Endothelial cell of umbilical vein (primary cell): ENCODE measurements at regions of chrX and their contacts with region 1.

Region 1: GRCh38 chrX:38654302-38654701 is 93.0 kb downstream of the TSPAN7 start:
- DNase-seq: peak; percentile 43
- H3K4me3 ChIP-seq: no peak overlapping the region
- H3K27ac ChIP-seq: no peak overlapping the region
- H3K4me1 ChIP-seq: no peaks in the 10 kb centered on the region
- H3K27me3 ChIP-seq: no peaks in the 10 kb centered on the region
- CTCF ChIP-seq: peak; percentile 34 to 37
- POLR2A ChIP-seq: no peak

Region 2: GRCh38 chrX:38260231-38260630 is 394.1 kb before region 1 on chrX:
- CTCF ChIA-PET with region 1: no interaction called
- POLR2A ChIA-PET with region 1: no interaction called
- dilution Hi-C with region 1: no loop called
- intact Hi-C with region 1: loop called (anchors 5 kb)
- DNase-seq: peak; percentile 35
- H3K4me3 ChIP-seq: no peak overlapping the region
- H3K27ac ChIP-seq: no peak overlapping the region
- H3K4me1 ChIP-seq: no peaks in the 10 kb centered on the region
- H3K27me3 ChIP-seq: no peaks in the 10 kb centered on the region
- CTCF ChIP-seq: peak; percentile 15 to 31
- POLR2A ChIP-seq: no peak

Region 3: DNA sequence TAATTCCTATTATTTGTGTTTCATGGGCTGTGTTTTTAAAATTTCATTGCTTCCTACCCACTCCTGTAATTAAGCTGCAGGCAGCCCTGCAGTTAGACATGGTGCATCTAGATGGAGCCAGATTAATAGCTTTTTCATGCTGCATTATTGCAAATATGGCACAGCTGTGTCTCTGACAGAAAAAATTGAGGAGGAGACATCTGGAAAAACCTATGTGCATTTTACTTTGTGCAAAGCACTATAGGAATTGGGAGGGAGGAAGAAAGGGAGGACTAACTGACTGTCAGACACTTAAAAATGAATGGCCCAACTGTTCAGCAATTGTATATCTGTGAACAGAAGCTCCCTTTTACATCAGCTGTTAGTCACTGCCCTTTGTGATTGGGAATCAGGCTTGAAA is 318.9 kb before region 1 on chrX:
- CTCF ChIA-PET with region 1: interaction called, 29 read pairs
- POLR2A ChIA-PET with region 1: no interaction called
- dilution Hi-C with region 1: no loop called
- intact Hi-C with region 1: loop called (anchors 5 kb)
- DNase-seq: no peak
- H3K4me3 ChIP-seq: no peak overlapping the region
- H3K27ac ChIP-seq: no peak overlapping the region
- H3K4me1 ChIP-seq: peaks cover 5% of the 10 kb centered on the region
- H3K27me3 ChIP-seq: no peaks in the 10 kb centered on the region
- CTCF ChIP-seq: peak in 1 of 2 donors; percentile 27
- POLR2A ChIP-seq: no peak

Region 4: GRCh38 chrX:38375891-38376290 is 278.4 kb before region 1 on chrX:
- CTCF ChIA-PET with region 1: interaction called, 4 read pairs
- POLR2A ChIA-PET with region 1: no interaction called
- dilution Hi-C with region 1: no loop called
- intact Hi-C with region 1: loop called (anchors 1 kb)
- DNase-seq: peak; percentile 12
- H3K4me3 ChIP-seq: no peak overlapping the region
- H3K27ac ChIP-seq: no peak overlapping the region
- H3K4me1 ChIP-seq: no peaks in the 10 kb centered on the region
- H3K27me3 ChIP-seq: no peaks in the 10 kb centered on the region
- CTCF ChIP-seq: peak; percentile 28 to 40
- POLR2A ChIP-seq: no peak

Region 5: DNA sequence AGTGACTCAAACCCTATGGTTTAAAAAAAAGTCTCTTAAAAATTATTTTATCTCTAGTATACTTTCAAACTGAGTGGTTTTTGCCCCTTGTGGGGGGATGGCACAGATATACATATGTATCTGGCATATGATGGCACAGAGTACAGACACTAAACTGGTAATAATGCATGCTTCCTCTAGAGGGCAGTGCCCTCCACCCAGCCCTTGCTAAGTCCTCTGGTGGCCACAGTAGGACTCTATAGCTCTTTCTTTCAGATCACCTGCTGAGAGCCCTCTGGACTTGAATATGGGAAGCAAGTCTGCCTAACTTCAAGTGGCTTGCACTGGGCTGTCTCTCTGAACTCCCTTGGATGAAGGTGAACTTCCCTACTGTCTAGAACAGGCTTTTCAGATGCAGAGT is 26.6 kb before region 1 on chrX:
- CTCF ChIA-PET with region 1: interaction called, 34 read pairs
- POLR2A ChIA-PET with region 1: no interaction called
- dilution Hi-C with region 1: no loop called
- intact Hi-C with region 1: loop called (anchors 1 kb)
- DNase-seq: peak; percentile 29
- H3K4me3 ChIP-seq: no peak overlapping the region
- H3K27ac ChIP-seq: no peak overlapping the region
- H3K4me1 ChIP-seq: no peaks in the 10 kb centered on the region
- H3K27me3 ChIP-seq: no peaks in the 10 kb centered on the region
- CTCF ChIP-seq: peak; percentile 56 to 70
- POLR2A ChIP-seq: no peak